ENCODE measurements at regions of chr1 and their contacts with region 1.

Region 1: DNA sequence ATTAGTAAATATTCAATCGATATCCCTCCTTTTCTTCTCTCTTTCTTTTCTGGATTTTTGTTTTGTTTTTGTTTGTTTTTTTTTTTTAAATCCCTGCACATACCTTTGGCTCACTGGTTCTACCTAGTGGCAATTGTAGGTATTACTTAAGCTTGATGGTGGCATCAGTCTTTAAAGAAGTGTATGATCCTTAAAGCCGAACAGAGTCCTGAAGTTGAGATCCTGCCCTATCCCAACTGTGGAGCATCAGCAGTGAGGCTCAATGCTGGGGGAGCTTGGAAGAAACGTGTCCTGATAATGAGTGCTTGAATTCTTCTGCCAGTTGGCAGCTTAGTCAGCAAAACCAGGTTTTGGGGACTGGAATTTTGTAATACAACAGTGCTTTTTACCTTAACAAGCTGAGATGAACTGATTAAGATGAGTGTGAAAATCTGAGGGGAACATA is 60.8 kb downstream of the FASLG start:
- DNase-seq: no peak
- H3K4me3 ChIP-seq: peak overlapping the region in 1 of 3 experiments; percentile 1
- H3K27ac ChIP-seq: peak overlapping the region; percentile 77
- H3K4me1 ChIP-seq: peaks cover 46% of the 10 kb centered on the region
- H3K27me3 ChIP-seq: no peaks in the 10 kb centered on the region
- CTCF ChIP-seq: peak; percentile 6 to 61 (median 60)

Region 2: GRCh38 chr1:172609528-172609927 is 110.2 kb before region 1 on chr1:
- dilution Hi-C with region 1: loop called (anchors 25 kb)
- DNase-seq: no peak
- H3K4me3 ChIP-seq: no peak overlapping the region
- H3K27ac ChIP-seq: no peak overlapping the region
- H3K4me1 ChIP-seq: peaks cover 5% of the 10 kb centered on the region
- H3K27me3 ChIP-seq: no peaks in the 10 kb centered on the region
- CTCF ChIP-seq: peak in 2 of 3 experiments; percentile 20 to 30

Measured in keratinocyte (primary cell).